ENCODE measurements at regions of chr1 and their contacts with region 1.

Region 1: DNA sequence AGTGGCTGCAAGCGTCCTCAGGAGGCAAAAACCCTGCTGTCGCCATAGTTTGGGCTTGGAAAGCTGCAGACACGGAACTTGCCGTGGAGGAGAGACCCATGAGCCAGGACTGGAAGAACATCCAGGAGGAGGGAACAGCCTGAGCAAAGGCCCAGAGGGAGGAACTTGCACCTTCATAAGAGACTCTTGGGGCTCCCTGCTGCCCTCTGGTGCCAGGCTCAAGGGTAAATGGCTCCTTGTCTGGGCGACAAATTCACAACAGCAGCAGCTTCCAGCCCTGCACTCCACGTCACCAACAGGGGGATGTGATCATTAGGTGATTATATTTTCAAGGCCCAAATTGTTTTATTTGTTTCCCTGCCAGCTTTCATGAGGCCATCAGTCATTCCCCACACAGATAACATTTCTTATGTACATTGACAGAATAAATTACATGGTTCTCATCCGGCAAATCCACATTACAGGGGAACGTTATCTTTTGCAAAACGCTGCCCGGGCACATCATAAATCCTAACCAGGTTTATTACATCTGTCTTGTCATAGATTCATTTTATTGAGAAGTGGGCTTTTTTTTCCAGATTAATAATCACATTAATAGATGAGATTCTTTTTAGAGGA is 143.0 kb upstream of the GRIK3 start:
- DNase-seq: peak; percentile 47 to 79
- H3K4me3 ChIP-seq: no peak overlapping the region
- H3K27ac ChIP-seq: no peak overlapping the region
- H3K4me1 ChIP-seq: peaks cover 0 to 5% (median under 1%) of the 10 kb centered on the region in 4 experiments; a peak in 3 of 7 replicates
- H3K27me3 ChIP-seq: no peaks in the 10 kb centered on the region
- CTCF ChIP-seq: peak; percentile 81 to 89 (median 87)
- EP300 ChIP-seq: no peak
- POLR2A ChIP-seq: no peak
- RAD21 ChIP-seq: peak; percentile 65 to 79

Region 2: DNA sequence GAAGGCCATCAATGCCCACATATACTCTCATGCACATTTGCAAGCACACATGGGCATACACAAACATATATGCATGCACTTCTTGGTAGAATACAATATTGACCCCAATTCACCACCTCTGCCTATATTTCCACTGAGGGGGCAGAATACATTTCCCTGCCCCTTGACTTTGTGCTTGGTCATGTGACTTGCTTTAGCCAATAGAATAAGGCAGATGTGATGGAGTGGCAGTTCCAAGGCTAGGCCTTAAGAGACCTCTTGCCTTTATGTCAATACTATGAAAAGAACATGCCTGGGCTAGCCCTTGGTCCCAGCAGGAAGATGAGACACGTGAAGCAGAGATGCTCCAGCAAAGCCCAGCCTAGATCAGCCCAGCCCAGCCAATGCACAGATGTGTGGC is 77.0 kb before region 1 on chr1:
- CTCF ChIA-PET with region 1: no interaction called
- POLR2A ChIA-PET with region 1: no interaction called
- DNase-seq: no peak
- H3K4me3 ChIP-seq: no peak overlapping the region
- H3K27ac ChIP-seq: no peak overlapping the region
- H3K4me1 ChIP-seq: no peaks in the 10 kb centered on the region; a peak in 1 of 7 replicates
- H3K27me3 ChIP-seq: no peaks in the 10 kb centered on the region
- CTCF ChIP-seq: no peak
- EP300 ChIP-seq: no peak
- POLR2A ChIP-seq: no peak
- RAD21 ChIP-seq: no peak

Region 3: DNA sequence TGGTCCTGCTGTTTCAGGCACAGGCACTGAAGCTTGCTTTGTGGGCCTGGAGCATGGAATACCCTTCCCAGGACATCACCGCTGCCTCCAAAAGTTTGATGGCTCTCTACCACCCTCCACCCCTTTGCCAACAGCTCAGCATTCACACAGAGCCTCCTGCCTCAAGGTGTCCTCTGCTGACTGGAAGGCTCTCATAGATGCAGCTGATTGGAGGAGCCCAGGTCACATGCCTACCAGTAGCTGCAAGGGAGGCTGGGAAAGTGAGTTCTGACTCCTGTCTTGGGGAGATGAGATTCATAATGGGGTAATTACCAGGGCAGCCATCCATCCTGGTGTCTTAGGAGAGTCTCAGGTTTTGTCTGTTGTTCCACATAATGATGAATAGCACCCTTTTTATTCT is 18.3 kb before region 1 on chr1:
- CTCF ChIA-PET with region 1: interaction called, 12 read pairs
- POLR2A ChIA-PET with region 1: interaction called, 5 read pairs
- DNase-seq: peak in 1 of 2 experiments; percentile 47
- H3K4me3 ChIP-seq: no peak overlapping the region
- H3K27ac ChIP-seq: no peak overlapping the region
- H3K4me1 ChIP-seq: no peaks in the 10 kb centered on the region
- H3K27me3 ChIP-seq: no peaks in the 10 kb centered on the region
- CTCF ChIP-seq: no peak
- EP300 ChIP-seq: no peak
- POLR2A ChIP-seq: no peak
- RAD21 ChIP-seq: no peak

Region 4: DNA sequence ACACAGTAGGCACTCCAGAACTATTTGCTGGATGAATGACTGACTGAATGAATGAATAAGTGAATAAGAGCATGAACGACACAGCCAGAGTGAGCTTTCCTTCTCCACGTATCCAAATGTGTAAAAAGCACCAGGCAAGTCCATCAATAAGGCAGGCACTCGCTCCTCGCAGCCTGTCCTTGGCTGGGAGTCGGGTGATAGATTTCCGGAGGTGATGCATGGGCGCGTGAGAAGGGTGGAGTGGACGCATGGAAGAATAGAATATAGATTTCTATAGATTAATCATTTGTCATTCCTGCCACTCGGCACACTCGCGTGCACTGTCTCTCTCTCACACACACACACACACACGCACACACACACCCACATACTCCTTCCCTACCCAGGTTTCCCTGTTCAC is 132.7 kb after region 1 on chr1:
- CTCF ChIA-PET with region 1: no interaction called
- POLR2A ChIA-PET with region 1: no interaction called
- DNase-seq: no peak
- H3K4me3 ChIP-seq: no peak overlapping the region
- H3K27ac ChIP-seq: no peak overlapping the region
- H3K4me1 ChIP-seq: peaks cover 3 to 17% (median 12%) of the 10 kb centered on the region in 4 experiments; a peak in 6 of 7 replicates
- H3K27me3 ChIP-seq: no peaks in the 10 kb centered on the region; a peak in 1 of 7 replicates
- CTCF ChIP-seq: no peak
- EP300 ChIP-seq: no peak
- POLR2A ChIP-seq: no peak
- RAD21 ChIP-seq: no peak

Measured in H1 (cell line).